Activated CD8-positive, alpha-beta T cell treated with anti-CD3 and anti-CD28 coated beads for 36 hours (primary cell): ENCODE measurements at regions of chr7 and their contacts with region 1.

Region 1: DNA sequence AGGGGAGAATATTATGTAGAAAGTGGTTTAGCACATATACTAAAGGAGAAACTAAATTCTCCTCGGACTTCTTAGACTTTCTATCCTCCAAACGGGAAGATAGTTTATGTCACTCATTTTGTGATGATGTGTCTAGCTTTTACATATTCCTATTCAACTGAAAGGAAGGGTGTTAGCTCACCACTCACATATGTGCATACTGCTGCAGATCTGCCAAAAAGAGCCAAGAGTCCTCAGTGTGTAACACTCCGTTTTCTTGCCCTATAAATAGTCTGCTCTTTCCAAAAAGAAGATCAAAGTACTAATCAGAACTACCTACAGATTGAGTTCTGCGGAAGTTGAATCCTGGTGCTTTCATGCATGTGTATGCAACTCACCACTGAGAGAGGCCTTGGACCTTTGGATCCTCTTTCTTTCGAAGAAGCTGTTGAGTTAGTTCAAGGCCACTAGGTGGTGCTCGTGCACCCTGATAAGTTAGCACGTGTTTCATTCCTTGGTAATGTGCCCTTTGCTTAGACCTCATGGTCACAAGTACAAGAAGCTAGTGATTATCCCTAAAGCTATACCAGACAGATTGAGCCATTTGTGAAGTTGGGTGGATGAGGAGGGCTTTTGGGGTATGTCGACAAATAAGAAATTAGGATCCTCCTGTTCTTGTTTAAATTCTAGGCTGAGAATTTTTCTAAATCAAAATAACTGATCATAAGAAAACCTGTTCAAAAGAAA is 14.1 kb downstream of the YAE1 start:
- DNase-seq: peak; percentile 87
- ATAC-seq: peak; percentile 95
- H3K4me3 Mint-ChIP-seq: no peak overlapping the region
- H3K27ac Mint-ChIP-seq: peak overlapping the region; percentile 73
- H3K4me1 Mint-ChIP-seq: peaks cover 15% of the 10 kb centered on the region
- H3K27me3 Mint-ChIP-seq: no peaks in the 10 kb centered on the region
- CTCF ChIP-seq: peak; percentile 83

Region 2: GRCh38 chr7:39566023-39566921 is 14.0 kb before region 1 on chr7 and contains the start of gene YAE1:
- CTCF ChIA-PET with region 1: interaction called, 15 read pairs
- POLR2A ChIA-PET with region 1: interaction called, 6 read pairs
- intact Hi-C with region 1: no loop called
- DNase-seq: peak; percentile 89
- ATAC-seq: peak; percentile 97
- H3K4me3 Mint-ChIP-seq: peak within 1 kb of the TSS; percentile 95
- H3K27ac Mint-ChIP-seq: peak within 1 kb of the TSS; percentile 96
- H3K4me1 Mint-ChIP-seq: peaks cover 27% of the 10 kb centered on the region
- H3K27me3 Mint-ChIP-seq: no peaks in the 10 kb centered on the region
- CTCF ChIP-seq: no peak
- total RNA-seq, gene YAE1: 9.6 to 10.9 TPM

Region 3: GRCh38 chr7:39616138-39616537 is 35.8 kb after region 1 on chr7:
- CTCF ChIA-PET with region 1: interaction called, 59 read pairs
- POLR2A ChIA-PET with region 1: no interaction called
- intact Hi-C with region 1: loop called (anchors 5 kb)
- DNase-seq: no peak
- ATAC-seq: no peak
- H3K4me3 Mint-ChIP-seq: no peak overlapping the region
- H3K27ac Mint-ChIP-seq: no peak overlapping the region
- H3K4me1 Mint-ChIP-seq: no peaks in the 10 kb centered on the region
- H3K27me3 Mint-ChIP-seq: peaks cover 7% of the 10 kb centered on the region
- CTCF ChIP-seq: no peak

Region 4: DNA sequence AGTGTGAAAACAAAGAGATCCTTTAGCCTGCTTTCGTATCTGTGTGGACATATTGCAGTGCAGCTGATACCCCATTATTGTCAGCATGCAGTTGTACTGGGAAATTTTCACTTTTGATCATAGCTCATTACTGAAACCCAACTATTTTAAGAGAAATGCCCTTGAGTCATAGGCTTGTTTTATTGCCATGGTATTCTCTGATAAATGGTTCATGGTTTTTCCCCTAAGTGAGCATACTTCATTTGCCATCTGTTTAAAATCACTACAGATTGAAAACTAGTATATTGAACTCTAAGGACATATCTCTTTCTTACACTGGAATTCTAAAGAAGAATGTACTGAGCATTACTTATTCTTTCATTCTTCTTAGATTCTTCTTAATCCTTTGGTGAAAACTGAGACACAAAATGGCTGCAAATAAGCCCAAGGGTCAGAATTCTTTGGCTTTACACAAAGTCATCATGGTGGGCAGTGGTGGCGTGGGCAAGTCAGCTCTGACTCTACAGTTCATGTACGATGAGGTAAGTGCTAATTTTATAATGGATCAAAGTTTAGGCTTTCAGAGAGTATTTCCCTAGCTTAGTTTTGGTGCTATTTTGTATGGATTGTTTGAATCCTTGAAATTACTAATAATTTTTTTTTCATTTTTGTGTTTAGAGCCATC is 106.1 kb after region 1 on chr7:
- CTCF ChIA-PET with region 1: interaction called, 10 read pairs
- POLR2A ChIA-PET with region 1: no interaction called
- intact Hi-C with region 1: no loop called
- DNase-seq: peak; percentile 33
- ATAC-seq: peak; percentile 89
- H3K4me3 Mint-ChIP-seq: no peak overlapping the region
- H3K27ac Mint-ChIP-seq: peak overlapping the region; percentile 72
- H3K4me1 Mint-ChIP-seq: peaks cover 57% of the 10 kb centered on the region
- H3K27me3 Mint-ChIP-seq: no peaks in the 10 kb centered on the region
- CTCF ChIP-seq: no peak

Region 5: DNA sequence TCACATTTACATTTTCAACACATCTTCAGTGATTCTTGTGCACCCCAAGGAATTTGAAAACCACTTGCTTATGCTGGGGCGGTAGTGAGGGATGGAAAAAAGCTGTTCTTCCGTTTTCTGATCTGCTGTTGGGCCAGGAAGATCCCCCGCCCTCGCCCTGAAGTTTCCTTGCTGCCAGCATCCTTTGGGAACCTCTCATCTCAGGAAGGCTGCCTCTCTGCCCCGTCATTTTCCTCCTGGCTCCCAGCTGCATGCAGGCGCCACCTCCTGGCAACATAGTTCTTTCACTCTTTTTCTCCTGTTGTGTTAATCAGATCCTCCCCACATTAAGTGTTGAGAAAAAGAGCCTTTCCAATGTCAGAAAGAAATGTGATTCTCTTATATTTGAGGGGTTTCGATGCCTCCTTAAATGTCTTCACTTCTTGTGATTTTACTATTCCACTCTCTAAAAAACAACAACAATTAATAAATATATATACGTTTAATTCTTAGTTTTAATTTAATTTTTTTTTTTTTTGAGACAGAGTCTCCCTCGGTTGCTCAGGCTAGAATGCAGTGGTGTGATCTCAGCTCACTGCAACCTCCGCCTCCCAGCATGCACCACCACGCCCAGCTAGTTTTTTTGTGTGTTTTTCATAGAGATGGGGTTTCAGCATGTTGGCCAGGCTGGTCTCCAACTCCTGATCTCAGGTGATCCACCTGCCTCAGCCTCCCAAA is 165.9 kb after region 1 on chr7:
- CTCF ChIA-PET with region 1: interaction called, 364 read pairs
- POLR2A ChIA-PET with region 1: interaction called, 6 read pairs
- intact Hi-C with region 1: loop called (anchors 2 kb)
- DNase-seq: peak; percentile 74
- ATAC-seq: no peak
- H3K4me3 Mint-ChIP-seq: no peak overlapping the region
- H3K27ac Mint-ChIP-seq: peak overlapping the region; percentile 5
- H3K4me1 Mint-ChIP-seq: peaks cover 14% of the 10 kb centered on the region
- H3K27me3 Mint-ChIP-seq: no peaks in the 10 kb centered on the region
- CTCF ChIP-seq: peak; percentile 73

Region 6: GRCh38 chr7:40057292-40057691 is 477.0 kb after region 1 on chr7:
- CTCF ChIA-PET with region 1: interaction called, 12 read pairs
- POLR2A ChIA-PET with region 1: no interaction called
- intact Hi-C with region 1: no loop called
- DNase-seq: no peak
- ATAC-seq: peak; percentile 27
- H3K4me3 Mint-ChIP-seq: no peak overlapping the region
- H3K27ac Mint-ChIP-seq: no peak overlapping the region
- H3K4me1 Mint-ChIP-seq: peaks cover 6% of the 10 kb centered on the region
- H3K27me3 Mint-ChIP-seq: no peaks in the 10 kb centered on the region
- CTCF ChIP-seq: no peak